Activated T-helper 1 cell treated with anti-CD3 and anti-CD28 coated beads, Interleukin-12 subunit alpha, Interleukin-12 subunit beta, Interleukin-2, Interleukin-4 antibody, amounts not matched to agents 30 ng/mL and 10 ng/mL and 1 ng/mL, durations not matched to agents 14 hours and 24 hours and 36 hours (primary cell): ENCODE measurements at regions of chr16 and their contacts with region 1.

Region 1: DNA sequence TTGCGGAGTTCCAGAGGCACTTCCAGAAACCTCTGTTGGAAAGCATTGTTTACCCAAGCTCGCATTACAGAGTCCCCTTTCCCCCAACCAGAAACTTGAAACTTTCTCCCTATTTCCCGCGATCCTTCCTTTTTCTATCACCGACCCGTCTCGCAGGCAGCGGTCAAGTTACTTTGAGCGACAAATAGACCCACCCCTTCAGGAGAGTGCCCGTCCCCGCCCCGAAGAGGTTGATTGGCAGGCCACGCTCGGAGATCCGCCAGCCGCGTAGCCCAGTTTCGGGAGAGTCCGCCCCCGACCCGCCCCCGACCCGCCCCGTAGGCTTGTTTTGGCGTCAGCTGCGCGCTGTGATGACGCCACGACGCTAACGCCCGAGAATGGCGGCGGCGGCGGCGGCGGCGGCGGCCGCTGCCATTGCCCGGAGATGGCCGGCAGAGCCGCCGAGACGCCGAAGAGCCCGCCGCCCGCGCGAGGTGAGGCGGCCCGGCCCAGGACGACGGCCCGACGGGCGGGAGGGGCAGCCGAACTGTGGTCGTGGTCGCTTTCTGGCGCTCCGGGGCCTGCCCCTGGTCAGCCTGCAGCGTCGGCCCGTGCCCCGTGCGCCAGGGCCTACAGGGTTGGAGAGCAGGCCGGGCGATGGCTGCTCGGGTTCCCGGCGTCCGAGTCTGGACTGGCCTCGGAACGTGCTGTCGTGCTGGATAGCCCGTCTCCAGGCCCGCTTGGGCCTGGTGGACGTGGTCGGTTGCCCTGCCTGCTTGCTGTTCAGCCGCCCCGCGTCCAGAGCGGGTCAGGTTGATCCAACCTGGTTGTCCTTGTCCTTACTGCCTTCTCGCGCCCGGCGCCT is at the start of gene PSKH1:
- DNase-seq: peak; percentile 88
- H3K4me3 Mint-ChIP-seq: peak within 1 kb of the TSS; percentile 98
- H3K27ac Mint-ChIP-seq: peak within 1 kb of the TSS; percentile 96
- H3K4me1 Mint-ChIP-seq: peaks cover 20% of the 10 kb centered on the region
- H3K27me3 Mint-ChIP-seq: no peaks in the 10 kb centered on the region
- total RNA-seq, gene PSKH1: 17.8 TPM in 2 replicates

Region 2: GRCh38 chr16:67546761-67547422 is 346.2 kb before region 1 on chr16:
- intact Hi-C with region 1: no loop called
- DNase-seq: peak; percentile 54
- H3K4me3 Mint-ChIP-seq: no peak overlapping the region
- H3K27ac Mint-ChIP-seq: peak overlapping the region; percentile 84
- H3K4me1 Mint-ChIP-seq: peaks cover 37% of the 10 kb centered on the region
- H3K27me3 Mint-ChIP-seq: no peaks in the 10 kb centered on the region

Region 3: GRCh38 chr16:67719048-67719777 is 173.9 kb before region 1 on chr16 and contains the start of gene GFOD2:
- intact Hi-C with region 1: loop called (anchors 1 kb)
- DNase-seq: peak; percentile 97
- H3K4me3 Mint-ChIP-seq: peak within 1 kb of the TSS; percentile 96
- H3K27ac Mint-ChIP-seq: peak within 1 kb of the TSS; percentile 94
- H3K4me1 Mint-ChIP-seq: peaks cover 33% of the 10 kb centered on the region
- H3K27me3 Mint-ChIP-seq: no peaks in the 10 kb centered on the region
- total RNA-seq, gene GFOD2: 19.6 and 20.3 TPM in 2 replicates

Region 4: DNA sequence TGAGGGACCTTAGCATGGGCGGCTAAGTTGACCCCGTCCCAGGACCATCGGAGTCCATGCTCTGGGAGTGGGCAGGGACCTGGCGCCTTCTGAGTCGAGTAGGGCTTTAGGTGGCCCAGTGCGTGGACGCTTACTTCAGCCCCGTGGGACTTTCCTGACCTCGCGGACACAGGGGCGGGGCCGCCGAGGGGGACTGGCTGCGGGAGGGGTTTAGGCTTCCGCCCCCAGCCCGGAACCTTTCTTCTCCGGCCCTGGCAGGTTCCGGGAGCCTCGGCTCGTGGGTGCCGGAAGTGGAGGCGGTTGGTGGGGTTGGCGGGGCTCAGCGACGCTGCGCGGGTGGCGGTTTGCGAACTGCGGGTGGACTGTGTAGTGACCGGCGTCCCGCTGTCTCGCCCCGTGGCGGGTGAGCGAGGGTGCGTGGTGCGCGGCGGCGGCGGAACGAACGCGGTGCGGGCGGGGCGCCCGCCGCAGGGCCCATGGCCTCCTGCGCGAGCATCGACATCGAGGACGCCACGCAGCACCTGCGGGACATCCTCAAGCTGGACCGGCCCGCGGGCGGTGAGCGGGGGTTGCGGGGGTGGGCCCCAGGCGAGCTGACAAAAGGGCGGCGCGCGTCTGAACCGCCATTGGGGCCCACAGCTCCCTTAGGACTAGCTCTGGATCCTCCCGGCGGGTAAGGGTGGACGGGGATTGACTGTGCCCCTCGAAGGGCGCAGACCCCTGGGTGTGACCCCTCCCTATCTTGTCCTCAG is 20.2 kb before region 1 on chr16 and contains the start of gene EDC4:
- intact Hi-C with region 1: loop called (anchors 1 kb)
- DNase-seq: peak; percentile 89
- H3K4me3 Mint-ChIP-seq: peak within 1 kb of the TSS; percentile 88
- H3K27ac Mint-ChIP-seq: peak within 1 kb of the TSS; percentile 81
- H3K4me1 Mint-ChIP-seq: peaks cover 35% of the 10 kb centered on the region
- H3K27me3 Mint-ChIP-seq: no peaks in the 10 kb centered on the region
- total RNA-seq, gene EDC4: 115 and 128 TPM in 2 replicates

Region 5: GRCh38 chr16:67968400-67969253 is 75.5 kb after region 1 on chr16 and contains the start of gene SLC12A4:
- intact Hi-C with region 1: loop called (anchors 1 kb)
- DNase-seq: peak; percentile 89
- H3K4me3 Mint-ChIP-seq: peak within 1 kb of the TSS; percentile 99
- H3K27ac Mint-ChIP-seq: peak within 1 kb of the TSS; percentile 96
- H3K4me1 Mint-ChIP-seq: peaks cover 40% of the 10 kb centered on the region
- H3K27me3 Mint-ChIP-seq: no peaks in the 10 kb centered on the region
- total RNA-seq, gene SLC12A4: 40.0 and 43.1 TPM in 2 replicates

Region 6: DNA sequence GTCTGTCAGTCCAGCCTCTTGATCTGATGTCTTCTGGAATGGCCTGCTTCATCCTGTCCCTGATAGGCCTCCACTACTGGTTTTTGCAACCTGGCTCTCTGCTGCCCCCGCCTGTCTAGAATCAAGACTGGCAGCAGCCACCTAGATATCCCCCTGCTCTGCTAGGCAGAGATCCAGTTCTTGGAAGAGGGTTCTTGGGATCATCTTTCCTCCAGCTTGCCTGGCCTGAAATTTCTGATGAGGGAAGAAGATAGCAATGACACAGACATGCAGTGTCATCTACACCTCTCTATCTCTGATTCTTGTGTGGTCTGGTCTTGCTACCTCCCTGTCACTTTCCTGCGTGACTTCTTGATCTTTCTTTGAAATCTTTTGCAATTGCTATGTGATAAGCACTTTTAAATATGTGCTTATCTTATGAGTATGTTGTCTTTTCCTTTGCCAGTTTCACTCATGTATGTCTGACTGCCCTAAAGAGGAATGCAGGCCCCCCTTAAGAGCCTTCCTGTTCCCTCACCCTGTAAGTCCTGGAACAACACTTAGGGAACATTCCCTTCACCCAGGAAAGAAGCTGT is 171.8 kb after region 1 on chr16:
- intact Hi-C with region 1: loop called (anchors 5 kb)
- DNase-seq: peak; percentile 59
- H3K4me3 Mint-ChIP-seq: no peak overlapping the region
- H3K27ac Mint-ChIP-seq: peak overlapping the region; percentile 75
- H3K4me1 Mint-ChIP-seq: peaks cover 81% of the 10 kb centered on the region
- H3K27me3 Mint-ChIP-seq: no peaks in the 10 kb centered on the region

Region 7: DNA sequence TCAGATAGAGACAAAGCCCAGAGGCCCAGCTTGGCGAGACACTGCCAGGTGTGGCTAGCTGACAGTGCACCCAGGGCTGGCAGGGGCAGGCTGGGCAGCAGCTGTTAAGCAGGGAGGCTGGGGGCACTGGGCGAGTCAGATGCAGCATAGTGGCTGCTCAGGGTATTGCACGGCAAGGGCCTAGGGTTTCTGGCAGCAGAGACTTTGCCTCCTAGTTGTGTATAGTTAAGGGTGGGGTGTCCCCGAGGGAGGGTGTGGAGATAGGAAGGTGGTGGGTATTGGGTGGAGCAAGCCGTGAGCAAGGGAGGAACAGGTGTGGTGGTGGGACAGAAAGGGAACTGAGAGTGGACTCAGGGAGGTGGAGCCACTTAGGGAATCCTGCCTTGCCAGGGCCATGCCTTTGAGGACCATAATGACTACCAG is 489.2 kb after region 1 on chr16:
- intact Hi-C with region 1: no loop called
- DNase-seq: no peak
- H3K4me3 Mint-ChIP-seq: no peak overlapping the region
- H3K27ac Mint-ChIP-seq: no peak overlapping the region
- H3K4me1 Mint-ChIP-seq: peaks cover 23% of the 10 kb centered on the region
- H3K27me3 Mint-ChIP-seq: peaks cover 25% of the 10 kb centered on the region